IMR-90 (cell line): ENCODE measurements at regions of chr2 and their contacts with region 1.

Region 1: DNA sequence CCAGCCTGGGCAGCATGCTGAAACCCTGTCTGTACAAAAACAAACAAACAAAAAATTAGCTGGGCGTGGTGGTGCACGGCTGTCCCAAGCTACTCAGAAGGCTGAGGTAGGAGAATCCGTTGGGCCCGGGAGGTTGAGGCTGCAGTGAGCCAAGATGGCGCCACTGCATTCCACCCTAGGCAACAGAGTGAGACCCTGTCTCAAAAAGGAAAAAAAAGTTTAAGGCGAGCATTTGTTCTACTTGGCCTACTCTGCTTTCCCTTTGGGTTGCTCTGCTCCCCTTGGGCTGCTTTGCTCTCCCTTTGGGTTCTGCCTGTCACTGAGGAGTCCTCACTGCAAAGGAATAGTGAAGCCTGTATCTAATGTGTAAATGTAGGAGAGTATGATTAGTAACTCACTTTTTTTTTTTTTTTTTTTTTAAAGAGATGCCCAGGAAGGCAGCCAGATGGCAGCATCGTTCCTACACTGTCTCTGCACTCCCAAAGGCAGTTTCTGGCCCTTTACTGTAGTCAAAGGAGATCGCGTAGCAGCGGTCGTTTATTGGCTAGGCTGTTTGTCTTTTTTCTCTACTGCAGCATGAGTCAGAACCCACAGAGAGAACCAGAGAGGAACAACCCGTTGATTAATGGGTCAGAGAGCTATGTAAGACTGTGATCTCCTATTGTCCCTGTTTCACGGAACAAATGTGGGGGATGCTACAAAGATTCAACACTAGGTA is 118.3 kb upstream of the CWC22 start:
- DNase-seq: peak; percentile 96
- ATAC-seq: peak; percentile 97
- H3K4me3 ChIP-seq: no peak overlapping the region
- H3K27ac ChIP-seq: no peak overlapping the region
- H3K4me1 ChIP-seq: 0 out of 2 replicates have a peak, but pooled peaks cover 2% of the 10 kb centered on the region
- H3K27me3 ChIP-seq: no peaks in the 10 kb centered on the region
- CTCF ChIP-seq: peak; percentile 89
- POLR2A ChIP-seq: peak; percentile 40; the same call in 1 of the 2 replicates
- RAD21 ChIP-seq: peak; percentile 91

Region 2: GRCh38 chr2:179768765-179769164 is 356.6 kb before region 1 on chr2:
- CTCF ChIA-PET with region 1: no interaction called
- POLR2A ChIA-PET with region 1: no interaction called
- dilution Hi-C with region 1: no loop called
- in situ Hi-C with region 1: no loop called
- intact Hi-C with region 1: no loop called
- DNase-seq: peak; percentile 1
- ATAC-seq: no peak
- H3K4me3 ChIP-seq: no peak overlapping the region
- H3K27ac ChIP-seq: no peak overlapping the region
- H3K4me1 ChIP-seq: no peaks in the 10 kb centered on the region
- H3K27me3 ChIP-seq: no peaks in the 10 kb centered on the region; the same call in 1 of the 2 replicates
- CTCF ChIP-seq: no peak
- POLR2A ChIP-seq: no peak
- RAD21 ChIP-seq: no peak

Region 3: GRCh38 chr2:180240774-180241173 is 115.4 kb after region 1 on chr2:
- CTCF ChIA-PET with region 1: no interaction called
- POLR2A ChIA-PET with region 1: no interaction called
- dilution Hi-C with region 1: no loop called
- in situ Hi-C with region 1: no loop called
- intact Hi-C with region 1: loop called (anchors 5 kb)
- DNase-seq: peak; percentile 22
- ATAC-seq: peak; percentile 54
- H3K4me3 ChIP-seq: no peak overlapping the region
- H3K27ac ChIP-seq: no peak overlapping the region
- H3K4me1 ChIP-seq: no peaks in the 10 kb centered on the region
- H3K27me3 ChIP-seq: no peaks in the 10 kb centered on the region
- CTCF ChIP-seq: peak; percentile 48
- POLR2A ChIP-seq: no peak
- RAD21 ChIP-seq: peak; percentile 55

Region 4: GRCh38 chr2:181058378-181059269 is 933.2 kb after region 1 on chr2:
- CTCF ChIA-PET with region 1: interaction called, 5 read pairs
- POLR2A ChIA-PET with region 1: no interaction called
- dilution Hi-C with region 1: no loop called
- in situ Hi-C with region 1: no loop called
- intact Hi-C with region 1: loop called (anchors 1 kb)
- DNase-seq: peak; percentile 29
- ATAC-seq: no peak
- H3K4me3 ChIP-seq: no peak overlapping the region
- H3K27ac ChIP-seq: no peak overlapping the region
- H3K4me1 ChIP-seq: no peaks in the 10 kb centered on the region
- H3K27me3 ChIP-seq: no peaks in the 10 kb centered on the region
- CTCF ChIP-seq: peak; percentile 55
- POLR2A ChIP-seq: no peak
- RAD21 ChIP-seq: peak; percentile 67

Region 5: DNA sequence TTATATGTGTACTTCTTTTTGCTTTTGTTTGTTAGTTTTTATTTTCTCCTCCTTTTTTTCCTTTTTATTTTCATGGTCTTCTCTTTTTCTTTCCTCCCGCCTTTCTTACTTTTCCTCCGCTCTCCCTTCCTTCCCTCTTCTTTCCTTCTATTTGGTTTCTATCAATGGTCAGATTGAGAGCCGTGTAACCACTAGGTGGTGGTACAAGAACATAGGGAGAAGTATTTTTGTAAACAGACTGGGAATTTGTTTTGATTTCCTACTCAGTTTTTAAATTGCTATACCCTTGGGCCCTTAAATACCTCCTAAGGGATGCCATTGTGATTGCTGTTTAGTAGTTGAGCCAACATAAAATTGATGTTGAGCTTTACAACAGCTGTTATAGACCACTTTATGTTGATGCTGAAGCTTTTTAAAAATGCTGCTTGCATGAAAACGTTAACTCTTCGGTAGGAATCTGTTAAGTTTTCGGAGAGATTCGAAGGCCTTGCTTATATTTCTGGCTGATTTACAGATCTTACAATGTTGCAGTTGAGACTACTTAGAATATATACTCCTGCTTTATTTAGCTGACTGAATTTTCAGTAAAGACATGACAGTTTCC is 979.2 kb after region 1 on chr2:
- CTCF ChIA-PET with region 1: interaction called, 5 read pairs
- POLR2A ChIA-PET with region 1: no interaction called
- dilution Hi-C with region 1: no loop called
- in situ Hi-C with region 1: loop called (anchors 10 kb)
- intact Hi-C with region 1: loop called (anchors 1 kb)
- DNase-seq: peak; percentile 76
- ATAC-seq: peak; percentile 50
- H3K4me3 ChIP-seq: no peak overlapping the region
- H3K27ac ChIP-seq: no peak overlapping the region
- H3K4me1 ChIP-seq: peaks cover 5% of the 10 kb centered on the region
- H3K27me3 ChIP-seq: no peaks in the 10 kb centered on the region
- CTCF ChIP-seq: peak; percentile 90
- POLR2A ChIP-seq: no peak
- RAD21 ChIP-seq: peak; percentile 86

Region 6: DNA sequence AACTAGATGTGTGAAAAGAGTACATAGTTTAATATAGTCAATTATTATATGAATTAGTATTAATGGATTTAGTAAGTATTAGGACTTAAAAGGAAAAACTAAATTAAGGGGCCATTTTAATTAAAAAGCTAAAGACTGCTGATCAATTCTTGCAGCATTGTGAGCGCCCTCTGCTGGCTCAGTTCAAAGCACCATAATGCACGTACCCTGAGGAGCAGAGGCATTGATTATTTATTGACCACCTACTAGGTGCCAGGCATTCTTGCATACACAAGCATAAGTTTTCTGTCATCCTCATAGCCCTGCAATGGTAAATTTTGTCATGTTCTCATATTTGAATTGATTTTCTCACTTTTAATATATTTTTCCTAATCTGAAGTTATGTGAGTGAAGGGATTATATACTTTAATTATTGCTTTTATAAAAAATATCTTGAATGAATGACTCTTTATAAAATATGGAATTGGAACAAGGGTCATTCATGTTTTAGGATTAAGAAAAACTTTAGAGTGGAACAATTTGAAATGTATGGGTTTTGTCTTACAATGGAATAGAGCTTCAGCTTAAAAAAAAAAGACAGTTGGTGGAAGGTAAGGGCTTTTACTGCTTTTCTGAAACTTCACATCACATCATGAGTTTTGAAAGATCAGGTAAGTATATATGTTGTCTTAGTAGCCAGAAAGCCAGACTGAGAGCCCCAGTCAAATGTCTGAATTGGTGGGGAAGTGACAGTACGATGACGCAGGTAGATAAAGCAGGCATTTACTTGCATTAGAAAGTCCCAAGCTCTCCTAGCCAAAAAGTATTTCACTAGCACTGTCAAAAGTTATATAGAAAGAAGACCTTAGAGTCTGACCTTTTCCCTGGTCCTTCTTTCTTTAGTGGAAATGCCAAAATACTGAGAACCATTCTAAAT is 1341.5 kb after region 1 on chr2:
- CTCF ChIA-PET with region 1: interaction called, 3 read pairs
- POLR2A ChIA-PET with region 1: no interaction called
- dilution Hi-C with region 1: no loop called
- in situ Hi-C with region 1: loop called (anchors 10 kb)
- intact Hi-C with region 1: no loop called
- DNase-seq: peak; percentile 63
- ATAC-seq: peak; percentile 63; the same call in 1 of the 2 replicates
- H3K4me3 ChIP-seq: no peak overlapping the region
- H3K27ac ChIP-seq: no peak overlapping the region
- H3K4me1 ChIP-seq: no peaks in the 10 kb centered on the region
- H3K27me3 ChIP-seq: no peaks in the 10 kb centered on the region
- CTCF ChIP-seq: peak; percentile 75
- POLR2A ChIP-seq: no peak
- RAD21 ChIP-seq: peak; percentile 63

Region 7: DNA sequence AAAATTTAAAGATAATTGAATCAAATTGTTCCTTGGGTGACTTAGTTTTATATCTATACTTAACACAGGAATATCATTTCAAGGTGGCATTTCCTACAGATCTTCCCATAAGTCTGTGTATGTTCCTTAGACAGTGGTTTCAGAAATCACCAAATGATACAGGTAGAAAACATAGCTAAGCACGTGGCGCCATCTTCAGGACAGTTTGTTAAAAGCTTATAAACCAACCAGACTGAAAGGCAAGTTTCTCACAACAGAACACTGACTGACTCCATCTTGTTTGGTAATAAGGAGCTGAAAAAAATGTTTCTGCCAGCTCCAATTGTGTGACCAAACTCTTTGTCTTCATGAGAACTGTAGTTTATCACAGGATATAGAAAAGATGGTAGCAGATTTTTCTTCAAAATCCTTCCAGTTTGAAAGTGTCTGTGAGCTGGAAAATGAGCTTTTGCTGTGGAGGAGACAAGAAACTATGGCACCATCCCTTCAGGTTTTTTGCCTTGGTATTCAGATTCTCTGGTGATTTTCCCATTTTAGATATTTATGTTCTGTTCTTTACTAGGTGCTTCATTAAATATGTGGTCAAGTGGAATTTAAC is 1589.7 kb after region 1 on chr2:
- CTCF ChIA-PET with region 1: interaction called, 8 read pairs
- POLR2A ChIA-PET with region 1: no interaction called
- dilution Hi-C with region 1: no loop called
- in situ Hi-C with region 1: loop called (anchors 5 kb)
- intact Hi-C with region 1: loop called (anchors 1 kb)
- DNase-seq: peak; percentile 82
- ATAC-seq: peak; percentile 92
- H3K4me3 ChIP-seq: no peak overlapping the region
- H3K27ac ChIP-seq: no peak overlapping the region
- H3K4me1 ChIP-seq: no peaks in the 10 kb centered on the region
- H3K27me3 ChIP-seq: no peaks in the 10 kb centered on the region; the same call in none of the 2 replicates
- CTCF ChIP-seq: peak; percentile 79
- POLR2A ChIP-seq: no peak
- RAD21 ChIP-seq: peak; percentile 90